Cardiac septum (tissue), 1 donor: ENCODE measurements at regions of chr18 and their contacts with region 1.

Region 1: GRCh38 chr18:21361307-21361880 is 119.4 kb downstream of the GREB1L start:
- DNase-seq: no peak

Region 2: DNA sequence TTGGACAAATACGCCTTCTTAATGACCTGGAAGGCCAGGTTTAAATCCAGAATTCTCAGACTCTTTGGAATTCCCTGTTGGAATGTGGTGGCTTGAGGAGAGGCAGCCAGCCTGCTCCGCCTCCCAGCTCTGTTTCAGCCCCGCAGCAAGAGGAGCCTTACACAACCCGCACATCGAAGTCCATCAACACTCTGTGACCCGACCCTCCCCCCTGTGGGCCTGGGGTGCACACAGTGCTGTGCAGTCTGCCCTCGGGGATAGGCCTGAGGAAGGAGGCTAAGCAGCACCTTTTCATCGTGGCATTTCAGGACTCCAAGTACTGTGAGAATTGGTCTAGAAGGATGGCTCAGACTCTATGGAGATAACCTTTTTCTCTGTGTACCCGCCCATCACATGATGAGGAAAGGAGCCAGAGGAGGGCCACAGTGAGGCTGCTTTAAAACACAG is 45.6 kb before region 1 on chr18:
- intact Hi-C with region 1: loop called (anchors 10 kb)
- DNase-seq: no peak

Region 3: DNA sequence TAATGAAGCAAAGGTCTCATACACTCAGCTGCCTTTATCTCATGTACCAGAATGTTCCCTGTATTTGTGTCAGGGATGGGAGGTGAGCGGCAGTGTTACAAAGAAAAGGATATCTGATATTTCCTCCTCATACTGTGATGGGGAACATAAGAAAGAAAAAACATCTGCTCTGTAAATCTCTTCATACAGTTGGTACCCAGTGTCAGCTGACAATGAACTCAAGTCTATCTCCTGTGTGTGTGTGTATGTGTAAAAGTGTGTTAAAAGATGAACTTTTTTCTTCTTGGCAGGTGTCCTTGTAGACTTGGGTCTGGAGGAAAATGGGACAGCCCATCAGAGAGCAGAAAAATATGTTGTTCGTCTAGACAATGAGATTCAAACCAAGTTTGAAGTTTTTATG is 111.3 kb after region 1 on chr18:
- intact Hi-C with region 1: no loop called
- DNase-seq: no peak

Region 4: GRCh38 chr18:21600526-21601410 is 239.4 kb after region 1 on chr18 and contains the start of gene ESCO1:
- intact Hi-C with region 1: no loop called
- DNase-seq: peak; percentile 98
- total RNA-seq, gene ESCO1: 9.4 TPM